ENCODE measurements at regions of chr15 and their contacts with region 1.

Region 1: DNA sequence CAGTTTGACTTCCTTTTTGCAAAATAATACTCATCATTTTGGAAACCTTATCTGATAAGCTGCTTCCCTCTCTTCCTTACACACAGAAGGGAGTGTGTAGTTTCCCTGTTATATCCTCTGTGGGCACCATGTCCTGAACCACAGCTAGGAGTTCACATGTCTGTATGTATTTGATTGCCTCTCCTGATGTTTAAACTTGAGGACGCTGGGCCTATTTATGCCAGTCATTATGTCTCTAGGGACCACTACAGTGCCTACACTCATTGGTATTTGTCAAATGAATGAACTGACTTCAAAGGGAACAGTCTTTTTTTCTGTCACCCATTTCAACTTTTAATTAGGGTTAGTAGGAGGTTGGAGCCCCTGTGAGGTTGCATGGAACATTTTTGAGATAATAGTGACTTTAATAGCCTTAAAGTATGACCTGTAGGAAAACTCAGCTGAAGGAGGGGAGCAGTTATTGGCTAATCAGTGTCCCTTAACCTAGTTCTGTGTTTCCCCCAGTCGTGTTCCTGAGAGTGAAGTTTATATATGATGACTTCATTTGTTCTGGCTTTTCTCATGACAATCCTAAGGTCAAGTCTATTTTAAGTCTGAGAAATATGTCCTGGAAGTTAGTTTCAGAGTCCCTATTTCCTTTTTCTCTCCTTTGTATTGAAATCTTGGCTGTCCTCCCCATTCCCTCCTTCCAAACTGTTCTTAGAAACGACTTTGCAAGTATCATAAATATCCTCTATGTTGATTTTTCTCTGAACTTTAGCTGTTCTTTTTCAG is 28.9 kb downstream of the PDE8A start:
- DNase-seq: peak; percentile 33
- ATAC-seq: peak; percentile 59
- H3K4me3 ChIP-seq: peak overlapping the region in 1 of 5 experiments; percentile 8
- H3K4me3 Mint-ChIP-seq: peak overlapping the region; percentile 3
- H3K27ac ChIP-seq: peak overlapping the region; percentile 44 to 54
- H3K27ac Mint-ChIP-seq: peak overlapping the region; percentile 57
- H3K4me1 ChIP-seq: peaks cover 51 to 58% of the 10 kb centered on the region in 2 donors
- H3K4me1 Mint-ChIP-seq: peaks cover 67% of the 10 kb centered on the region
- H3K27me3 ChIP-seq: no peaks in the 10 kb centered on the region
- H3K27me3 Mint-ChIP-seq: no peaks in the 10 kb centered on the region
- CTCF ChIP-seq: peak; percentile 58

Region 2: DNA sequence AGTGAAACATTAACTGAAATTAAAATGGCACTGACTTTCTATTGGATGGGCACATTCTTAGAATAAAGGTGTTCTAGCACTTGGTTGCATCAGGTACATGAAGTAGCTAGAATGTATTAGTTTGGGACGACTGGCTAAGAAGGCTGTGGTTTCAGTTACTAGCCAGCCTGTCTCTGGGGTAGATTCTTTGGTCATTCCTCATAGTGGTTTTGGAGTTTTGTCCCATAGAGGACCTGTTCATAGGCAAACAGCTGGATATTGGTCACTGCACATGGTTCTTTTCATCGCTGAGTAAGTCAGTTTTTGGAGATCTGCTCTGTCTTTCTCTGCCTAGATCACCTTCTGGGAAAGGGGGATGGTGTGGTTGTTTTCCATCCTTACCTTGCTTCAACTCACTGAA is 1301.3 kb before region 1 on chr15:
- CTCF ChIA-PET with region 1: no interaction called
- POLR2A ChIA-PET with region 1: no interaction called
- intact Hi-C with region 1: no loop called
- DNase-seq: no peak
- ATAC-seq: no peak
- H3K4me3 ChIP-seq: no peak overlapping the region
- H3K4me3 Mint-ChIP-seq: no peak overlapping the region
- H3K27ac ChIP-seq: no peak overlapping the region
- H3K27ac Mint-ChIP-seq: no peak overlapping the region
- H3K4me1 ChIP-seq: no peaks in the 10 kb centered on the region
- H3K4me1 Mint-ChIP-seq: no peaks in the 10 kb centered on the region
- H3K27me3 ChIP-seq: no peaks in the 10 kb centered on the region
- H3K27me3 Mint-ChIP-seq: no peaks in the 10 kb centered on the region
- CTCF ChIP-seq: no peak

Region 3: DNA sequence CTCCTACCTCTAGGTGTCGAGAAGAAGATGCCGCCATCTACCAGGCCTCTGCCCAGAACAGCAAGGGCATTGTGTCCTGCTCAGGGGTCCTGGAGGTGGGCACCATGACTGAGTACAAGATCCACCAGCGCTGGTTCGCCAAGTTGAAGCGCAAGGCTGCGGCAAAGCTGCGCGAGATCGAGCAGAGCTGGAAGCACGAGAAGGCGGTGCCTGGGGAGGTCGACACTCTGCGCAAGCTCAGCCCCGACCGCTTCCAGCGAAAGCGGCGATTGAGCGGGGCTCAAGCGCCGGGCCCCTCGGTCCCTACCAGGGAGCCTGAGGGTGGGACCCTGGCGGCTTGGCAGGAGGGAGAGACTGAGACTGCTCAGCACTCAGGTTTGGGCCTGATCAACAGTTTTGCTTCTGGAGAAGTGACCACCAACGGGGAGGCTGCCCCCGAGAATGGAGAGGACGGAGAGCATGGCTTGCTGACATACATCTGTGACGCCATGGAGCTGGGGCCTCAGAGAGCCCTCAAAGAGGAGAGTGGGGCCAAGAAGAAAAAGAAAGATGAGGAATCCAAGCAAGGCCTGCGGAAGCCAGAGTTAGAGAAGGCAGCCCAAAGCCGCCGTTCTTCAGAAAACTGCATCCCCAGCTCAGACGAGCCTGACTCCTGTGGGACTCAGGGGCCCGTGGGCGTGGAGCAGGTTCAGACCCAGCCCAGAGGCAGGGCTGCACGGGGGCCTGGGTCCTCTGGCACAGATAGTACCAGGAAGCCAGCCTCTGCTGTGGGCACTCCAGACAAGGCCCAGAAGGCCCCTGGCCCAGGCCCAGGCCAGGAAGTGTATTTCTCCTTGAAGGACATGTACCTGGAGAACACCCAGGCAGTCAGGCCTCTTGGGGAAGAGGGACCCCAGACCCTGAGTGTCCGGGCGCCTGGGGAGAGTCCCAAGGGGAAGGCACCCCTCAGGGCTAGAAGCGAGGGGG is 170.6 kb before region 1 on chr15:
- CTCF ChIA-PET with region 1: interaction called, 4 read pairs
- POLR2A ChIA-PET with region 1: no interaction called
- intact Hi-C with region 1: loop called (anchors 1 kb)
- DNase-seq: no peak
- ATAC-seq: no peak
- H3K4me3 ChIP-seq: no peak overlapping the region
- H3K4me3 Mint-ChIP-seq: no peak overlapping the region
- H3K27ac ChIP-seq: no peak overlapping the region
- H3K27ac Mint-ChIP-seq: no peak overlapping the region
- H3K4me1 ChIP-seq: no peaks in the 10 kb centered on the region
- H3K4me1 Mint-ChIP-seq: no peaks in the 10 kb centered on the region
- H3K27me3 ChIP-seq: no peaks in the 10 kb centered on the region
- H3K27me3 Mint-ChIP-seq: peaks cover 24% of the 10 kb centered on the region
- CTCF ChIP-seq: no peak

Region 4: DNA sequence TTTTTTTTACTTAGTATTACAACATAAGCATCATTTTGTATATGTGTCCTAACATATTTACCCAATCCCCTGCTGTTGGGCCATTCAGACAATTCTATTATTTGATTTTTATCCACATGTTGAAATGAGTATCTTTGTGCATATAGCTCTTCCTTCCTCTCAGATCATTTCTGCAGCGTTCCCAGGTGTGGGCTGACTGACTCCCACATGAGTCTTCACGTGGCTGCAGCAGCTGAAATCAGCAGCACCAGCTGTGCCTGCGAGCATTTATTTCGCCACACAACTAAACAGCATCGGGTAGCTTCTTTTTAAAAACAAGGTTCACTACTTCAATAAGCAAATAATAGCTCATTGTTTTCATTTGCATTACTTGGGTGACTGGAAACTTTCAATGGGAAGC is 73.4 kb before region 1 on chr15:
- CTCF ChIA-PET with region 1: no interaction called
- POLR2A ChIA-PET with region 1: no interaction called
- intact Hi-C with region 1: no loop called
- DNase-seq: no peak
- ATAC-seq: no peak
- H3K4me3 ChIP-seq: no peak overlapping the region
- H3K4me3 Mint-ChIP-seq: no peak overlapping the region
- H3K27ac ChIP-seq: no peak overlapping the region
- H3K27ac Mint-ChIP-seq: no peak overlapping the region
- H3K4me1 ChIP-seq: no peaks in the 10 kb centered on the region
- H3K4me1 Mint-ChIP-seq: no peaks in the 10 kb centered on the region
- H3K27me3 ChIP-seq: no peaks in the 10 kb centered on the region
- H3K27me3 Mint-ChIP-seq: peaks cover 10% of the 10 kb centered on the region
- CTCF ChIP-seq: no peak

Region 5: GRCh38 chr15:84955089-84955848 is 55.3 kb before region 1 on chr15:
- CTCF ChIA-PET with region 1: interaction called, 15 read pairs
- POLR2A ChIA-PET with region 1: no interaction called
- intact Hi-C with region 1: loop called (anchors 1 kb)
- DNase-seq: peak; percentile 61
- ATAC-seq: peak; percentile 45
- H3K4me3 ChIP-seq: no peak overlapping the region
- H3K4me3 Mint-ChIP-seq: no peak overlapping the region
- H3K27ac ChIP-seq: no peak overlapping the region
- H3K27ac Mint-ChIP-seq: no peak overlapping the region
- H3K4me1 ChIP-seq: peaks cover 4 to 5% of the 10 kb centered on the region in 2 donors
- H3K4me1 Mint-ChIP-seq: peaks cover 9% of the 10 kb centered on the region
- H3K27me3 ChIP-seq: peaks cover 0 to 8% (median 0%) of the 10 kb centered on the region in 4 experiments
- H3K27me3 Mint-ChIP-seq: peaks cover 20% of the 10 kb centered on the region
- CTCF ChIP-seq: peak; percentile 56

Region 6: GRCh38 chr15:84973492-84974460 is 36.8 kb before region 1 on chr15:
- CTCF ChIA-PET with region 1: no interaction called
- POLR2A ChIA-PET with region 1: no interaction called
- intact Hi-C with region 1: no loop called
- DNase-seq: no peak
- ATAC-seq: no peak
- H3K4me3 ChIP-seq: no peak overlapping the region
- H3K4me3 Mint-ChIP-seq: no peak overlapping the region
- H3K27ac ChIP-seq: no peak overlapping the region
- H3K27ac Mint-ChIP-seq: no peak overlapping the region
- H3K4me1 ChIP-seq: no peaks in the 10 kb centered on the region
- H3K4me1 Mint-ChIP-seq: peaks cover 6% of the 10 kb centered on the region
- H3K27me3 ChIP-seq: no peaks in the 10 kb centered on the region
- H3K27me3 Mint-ChIP-seq: peaks cover 14% of the 10 kb centered on the region
- CTCF ChIP-seq: no peak

Region 7: DNA sequence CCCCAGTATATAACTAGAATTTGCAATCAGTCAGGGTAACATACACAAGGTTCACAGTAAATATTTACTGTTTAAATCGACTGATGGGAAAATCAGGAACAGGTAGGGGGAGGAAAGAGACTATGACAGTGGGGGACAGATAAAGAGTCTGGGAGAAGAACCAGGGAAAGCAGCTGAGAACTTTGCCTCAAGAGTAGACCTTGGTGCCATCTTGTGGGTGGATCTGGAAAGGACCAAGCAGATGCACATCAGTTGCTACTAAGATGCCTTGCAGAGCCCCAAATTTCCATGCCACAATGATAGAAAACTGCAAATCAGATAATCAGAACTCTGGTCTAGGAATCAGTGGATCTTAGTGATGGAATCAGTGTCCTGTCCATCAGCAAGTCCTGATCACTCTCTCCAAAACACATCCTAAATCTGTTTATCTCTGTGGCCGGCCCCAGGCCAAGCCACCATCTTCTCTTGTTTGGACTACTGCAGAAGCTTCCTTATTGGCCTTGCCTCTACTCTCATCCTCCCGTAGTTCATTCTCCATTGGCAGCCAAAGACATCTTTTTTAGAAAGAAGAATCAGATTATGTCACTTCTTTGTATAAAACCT is 33.8 kb after region 1 on chr15:
- CTCF ChIA-PET with region 1: interaction called, 12 read pairs
- POLR2A ChIA-PET with region 1: no interaction called
- intact Hi-C with region 1: loop called (anchors 5 kb)
- DNase-seq: peak; percentile 71
- ATAC-seq: peak; percentile 49
- H3K4me3 ChIP-seq: no peak overlapping the region
- H3K4me3 Mint-ChIP-seq: no peak overlapping the region
- H3K27ac ChIP-seq: no peak overlapping the region
- H3K27ac Mint-ChIP-seq: no peak overlapping the region
- H3K4me1 ChIP-seq: peaks cover 3 to 9% of the 10 kb centered on the region in 2 donors
- H3K4me1 Mint-ChIP-seq: peaks cover 32% of the 10 kb centered on the region
- H3K27me3 ChIP-seq: no peaks in the 10 kb centered on the region
- H3K27me3 Mint-ChIP-seq: no peaks in the 10 kb centered on the region
- CTCF ChIP-seq: peak; percentile 67

Region 8: GRCh38 chr15:85174521-85174920 is 163.9 kb after region 1 on chr15:
- CTCF ChIA-PET with region 1: no interaction called
- POLR2A ChIA-PET with region 1: no interaction called
- intact Hi-C with region 1: no loop called
- DNase-seq: no peak
- ATAC-seq: no peak
- H3K4me3 ChIP-seq: no peak overlapping the region
- H3K4me3 Mint-ChIP-seq: no peak overlapping the region
- H3K27ac ChIP-seq: no peak overlapping the region
- H3K27ac Mint-ChIP-seq: no peak overlapping the region
- H3K4me1 ChIP-seq: no peaks in the 10 kb centered on the region
- H3K4me1 Mint-ChIP-seq: no peaks in the 10 kb centered on the region
- H3K27me3 ChIP-seq: peaks cover 0 to 23% (median 11%) of the 10 kb centered on the region in 4 experiments
- H3K27me3 Mint-ChIP-seq: peaks cover 36% of the 10 kb centered on the region
- CTCF ChIP-seq: no peak